Heart left ventricle (tissue), 16 donors: ENCODE measurements at regions of chr6 and their contacts with region 1.

Region 1: GRCh38 chr6:31271641-31272357 is at the start of gene HLA-C:
- DNase-seq: peak; percentile 91 to 96 (median 94)
- ATAC-seq: peak; percentile 97 to 99 (median 99)
- H3K4me3 ChIP-seq: peak within 1 kb of the TSS; percentile 47 to 99 (median 74)
- H3K27ac ChIP-seq: peak within 1 kb of the TSS; percentile 70 to 100 (median 92)
- H3K4me1 ChIP-seq: peaks cover 0 to 24% (median 2%) of the 10 kb centered on the region in 12 donors
- H3K27me3 ChIP-seq: no peaks in the 10 kb centered on the region
- CTCF ChIP-seq: peak in 2 of 12 donors; percentile 11 to 23
- POLR2A ChIP-seq: peak in 1 of 2 donors; percentile 98
- total RNA-seq, gene HLA-C: 160 to 1,096 (median 318) TPM

Region 2: DNA sequence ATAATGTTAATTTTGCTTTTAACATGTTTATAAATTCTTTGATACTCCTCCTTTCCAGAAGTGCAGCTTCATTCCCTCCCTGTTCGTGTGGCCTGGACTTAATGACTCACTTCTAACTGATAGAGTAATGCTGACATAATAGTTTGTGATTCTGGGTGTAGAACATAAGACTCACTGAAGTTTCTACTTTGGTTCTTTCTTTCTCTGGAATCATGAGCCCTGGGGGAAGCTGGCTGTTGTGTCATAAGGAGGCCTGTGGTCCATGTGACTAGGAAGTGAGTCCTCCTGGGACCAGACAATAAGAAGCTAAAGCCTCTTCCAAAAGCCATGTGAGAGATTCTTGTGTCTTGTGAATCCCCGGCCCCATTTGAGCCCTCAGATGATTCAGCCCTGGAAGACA is 1474.7 kb before region 1 on chr6:
- intact Hi-C with region 1: no loop called
- DNase-seq: no peak
- ATAC-seq: no peak
- H3K4me3 ChIP-seq: no peak overlapping the region
- H3K27ac ChIP-seq: no peak overlapping the region
- H3K4me1 ChIP-seq: peaks cover 0 to 12% (median 3%) of the 10 kb centered on the region in 12 donors
- H3K27me3 ChIP-seq: peaks cover 0 to 35% (median 6%) of the 10 kb centered on the region in 9 donors
- CTCF ChIP-seq: no peak
- POLR2A ChIP-seq: no peak

Region 3: DNA sequence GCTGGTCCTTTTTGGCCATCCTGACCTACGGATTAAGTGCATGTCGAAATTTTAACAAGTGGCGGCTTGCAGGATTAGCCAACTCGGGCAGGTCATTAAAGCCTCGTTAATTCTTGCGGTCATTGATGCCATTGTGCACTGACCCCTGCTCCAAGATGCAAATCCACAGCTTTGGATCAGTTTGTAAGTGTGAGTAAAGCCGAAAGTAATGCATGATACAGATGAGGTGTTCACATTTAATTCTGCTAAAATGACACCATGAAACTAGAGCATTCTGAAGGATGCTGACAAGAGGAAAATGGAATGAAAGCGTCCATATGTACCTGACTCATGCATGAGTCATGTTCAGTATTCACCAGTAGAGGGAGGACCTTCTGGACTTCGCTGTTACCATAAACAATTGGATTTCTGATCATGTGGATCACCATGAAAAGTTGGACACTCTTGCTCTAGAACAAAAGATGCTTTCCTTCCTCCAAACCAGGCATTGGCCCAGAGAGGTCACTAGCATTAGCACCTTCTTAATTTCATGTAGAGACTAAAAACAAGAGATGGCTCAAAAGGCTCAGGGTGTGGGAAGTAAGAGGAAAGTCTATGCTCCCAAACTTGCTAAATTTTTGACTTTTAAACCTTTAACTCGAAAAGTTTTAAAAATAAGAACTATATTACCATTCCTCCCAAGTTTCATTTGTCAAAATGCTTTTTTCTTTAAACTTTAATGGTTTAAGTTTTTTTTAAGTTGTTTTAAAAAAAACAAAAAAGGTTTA is 213.5 kb before region 1 on chr6:
- intact Hi-C with region 1: no loop called
- DNase-seq: no peak
- ATAC-seq: no peak
- H3K4me3 ChIP-seq: no peak overlapping the region
- H3K27ac ChIP-seq: no peak overlapping the region
- H3K4me1 ChIP-seq: no peaks in the 10 kb centered on the region
- H3K27me3 ChIP-seq: peaks cover 0 to 16% (median 0%) of the 10 kb centered on the region in 9 donors
- CTCF ChIP-seq: peak; percentile 18 to 58 (median 39)
- POLR2A ChIP-seq: no peak

Region 4: GRCh38 chr6:31197559-31198305 is 74.1 kb before region 1 on chr6:
- intact Hi-C with region 1: loop called in 9 of 10 experiments (anchors 1 to 5 kb)
- DNase-seq: peak; percentile 93 to 96 (median 94)
- ATAC-seq: peak; percentile 88 to 94 (median 90)
- H3K4me3 ChIP-seq: peak overlapping the region; percentile 48 to 87 (median 80)
- H3K27ac ChIP-seq: peak overlapping the region; percentile 95 to 99 (median 98)
- H3K4me1 ChIP-seq: peaks cover 0 to 31% (median 11%) of the 10 kb centered on the region in 12 donors
- H3K27me3 ChIP-seq: no peaks in the 10 kb centered on the region
- CTCF ChIP-seq: no peak
- POLR2A ChIP-seq: peak in 1 of 2 donors; percentile 64

Region 5: GRCh38 chr6:31227143-31227542 is 44.7 kb before region 1 on chr6:
- intact Hi-C with region 1: loop called in 1 of 10 experiments (anchors 5 kb)
- DNase-seq: no peak
- ATAC-seq: no peak
- H3K4me3 ChIP-seq: no peak overlapping the region
- H3K27ac ChIP-seq: no peak overlapping the region
- H3K4me1 ChIP-seq: peaks cover 0 to 21% (median 2%) of the 10 kb centered on the region in 12 donors
- H3K27me3 ChIP-seq: no peaks in the 10 kb centered on the region
- CTCF ChIP-seq: no peak
- POLR2A ChIP-seq: no peak

Region 6: DNA sequence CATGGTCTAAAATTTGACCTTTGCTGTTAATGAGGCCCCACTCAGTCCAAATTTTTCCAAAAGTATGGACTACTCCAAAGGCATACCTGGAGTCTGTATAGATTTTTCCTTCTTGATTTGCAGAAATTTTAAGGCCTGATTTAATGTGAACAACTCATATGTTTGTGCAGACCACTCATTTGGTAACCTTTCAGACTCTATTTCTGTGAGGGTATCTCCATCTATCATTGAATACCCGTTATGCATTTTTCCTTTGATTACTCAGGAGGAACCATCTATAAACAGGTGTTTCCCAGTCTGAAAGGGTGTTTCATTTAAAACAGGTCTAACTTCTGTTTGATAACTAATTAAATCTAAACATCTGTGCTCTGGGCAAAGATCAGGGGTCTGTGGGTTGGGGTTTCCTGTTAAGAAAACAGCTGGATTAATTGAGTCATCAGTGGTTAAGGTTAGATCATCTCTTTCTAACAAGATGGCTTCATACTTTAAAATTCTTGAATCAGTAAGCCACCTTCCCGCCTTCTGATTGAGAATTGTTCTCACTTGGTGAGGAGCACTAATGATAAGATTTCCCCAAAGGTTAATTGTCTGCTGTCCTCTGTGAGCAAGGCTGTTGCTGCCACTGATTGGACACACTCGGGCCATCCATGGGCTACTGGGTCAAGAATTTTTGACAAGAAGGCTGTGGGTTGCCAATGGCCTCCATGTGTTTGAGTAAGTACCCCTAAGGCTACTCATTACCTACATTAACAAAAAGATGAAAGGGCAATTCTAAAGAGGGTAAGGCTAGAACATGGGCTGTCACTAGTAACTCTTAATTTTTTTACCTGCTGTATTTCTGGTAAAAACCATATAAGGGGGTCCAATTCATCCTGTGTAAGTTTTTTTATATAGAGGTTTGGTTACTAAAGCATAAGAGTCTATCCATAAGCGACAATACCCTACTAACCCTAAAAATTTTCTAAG is 61.1 kb after region 1 on chr6:
- intact Hi-C with region 1: no loop called
- DNase-seq: no peak
- ATAC-seq: no peak
- H3K4me3 ChIP-seq: no peak overlapping the region
- H3K27ac ChIP-seq: no peak overlapping the region
- H3K4me1 ChIP-seq: no peaks in the 10 kb centered on the region
- H3K27me3 ChIP-seq: no peaks in the 10 kb centered on the region
- CTCF ChIP-seq: no peak
- POLR2A ChIP-seq: no peak

Region 7: DNA sequence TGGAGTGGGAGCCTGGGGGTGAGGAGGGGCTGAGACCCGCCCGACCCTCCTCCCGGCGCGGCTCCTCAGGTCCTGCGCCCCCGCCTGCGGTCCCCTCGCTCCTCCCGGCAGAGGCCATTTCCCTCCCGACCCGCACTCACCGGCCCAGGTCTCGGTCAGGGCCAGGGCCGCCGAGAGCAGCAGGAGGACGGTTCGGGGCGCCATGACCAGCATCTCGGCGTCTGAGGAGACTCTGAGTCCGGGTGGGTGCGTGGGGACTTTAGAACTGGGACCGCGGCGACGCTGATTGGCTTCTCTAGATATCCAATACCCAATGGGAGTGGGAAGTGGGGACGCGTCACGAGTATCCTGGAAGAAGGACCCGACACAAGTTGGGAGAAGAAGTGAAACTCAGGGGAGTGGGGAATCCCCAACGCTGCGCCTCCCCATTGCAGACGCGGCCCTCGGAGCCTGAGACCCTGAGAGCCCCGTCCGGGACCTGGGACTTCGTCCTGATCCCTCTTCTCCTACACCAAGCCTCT is 85.2 kb after region 1 on chr6 and contains the start of gene HLA-B:
- intact Hi-C with region 1: loop called in 9 of 10 experiments (anchors 1 to 5 kb)
- DNase-seq: peak; percentile 77 to 97 (median 93)
- ATAC-seq: peak; percentile 93 to 98 (median 98)
- H3K4me3 ChIP-seq: peak within 1 kb of the TSS; percentile 49 to 98 (median 71)
- H3K27ac ChIP-seq: peak within 1 kb of the TSS in 11 of 12 donors; percentile 70 to 100 (median 86)
- H3K4me1 ChIP-seq: peaks cover 0 to 30% (median 2%) of the 10 kb centered on the region in 12 donors
- H3K27me3 ChIP-seq: peaks cover 0 to 15% (median 0%) of the 10 kb centered on the region in 9 donors
- CTCF ChIP-seq: no peak
- POLR2A ChIP-seq: peak in 1 of 2 donors; percentile 92
- total RNA-seq, gene HLA-B: 235 to 2,858 (median 371) TPM

Region 8: DNA sequence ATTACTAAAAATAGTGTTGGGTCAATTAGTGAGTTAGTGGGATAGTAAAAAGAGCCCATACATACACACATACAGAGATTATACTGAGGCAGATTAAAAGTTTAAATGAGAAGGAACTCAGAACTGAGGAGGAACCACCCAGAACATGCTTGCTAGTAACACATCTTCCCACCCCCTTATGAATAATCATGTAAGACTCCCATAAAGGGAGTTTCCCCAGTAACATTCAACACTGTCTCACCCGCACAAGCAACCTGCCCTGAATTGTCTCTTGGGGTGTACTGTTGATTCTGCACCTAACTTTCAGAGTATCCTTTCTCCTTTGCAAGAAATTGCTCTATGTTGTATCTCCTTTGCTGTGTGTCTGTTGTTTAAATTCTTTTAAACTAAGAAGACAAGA is 1502.6 kb after region 1 on chr6:
- intact Hi-C with region 1: no loop called
- DNase-seq: no peak
- ATAC-seq: no peak
- H3K4me3 ChIP-seq: no peak overlapping the region
- H3K27ac ChIP-seq: no peak overlapping the region
- H3K4me1 ChIP-seq: no peaks in the 10 kb centered on the region
- H3K27me3 ChIP-seq: peaks cover 0 to 24% (median 7%) of the 10 kb centered on the region in 9 donors
- CTCF ChIP-seq: no peak
- POLR2A ChIP-seq: no peak